HEK293 (cell line): ENCODE measurements at regions of chr17 and their contacts with region 1.

Region 1: GRCh38 chr17:76671123-76671911 is 27.8 kb upstream of the ST6GALNAC1 start:
- H3K4me3 ChIP-seq: peak overlapping the region; percentile 71
- H3K27ac ChIP-seq: peak overlapping the region; percentile 97
- H3K4me1 ChIP-seq: peaks cover 36% of the 10 kb centered on the region
- CTCF ChIP-seq: peak; percentile 62

Region 2: GRCh38 chr17:76557368-76558197 is 113.7 kb before region 1 on chr17:
- CTCF ChIA-PET with region 1: interaction called, 5 read pairs
- POLR2A ChIA-PET with region 1: interaction called, 16 read pairs
- H3K4me3 ChIP-seq: peak overlapping the region; percentile 93
- H3K27ac ChIP-seq: peak overlapping the region; percentile 82
- H3K4me1 ChIP-seq: peaks cover 20% of the 10 kb centered on the region
- CTCF ChIP-seq: peak; percentile 97

Region 3: DNA sequence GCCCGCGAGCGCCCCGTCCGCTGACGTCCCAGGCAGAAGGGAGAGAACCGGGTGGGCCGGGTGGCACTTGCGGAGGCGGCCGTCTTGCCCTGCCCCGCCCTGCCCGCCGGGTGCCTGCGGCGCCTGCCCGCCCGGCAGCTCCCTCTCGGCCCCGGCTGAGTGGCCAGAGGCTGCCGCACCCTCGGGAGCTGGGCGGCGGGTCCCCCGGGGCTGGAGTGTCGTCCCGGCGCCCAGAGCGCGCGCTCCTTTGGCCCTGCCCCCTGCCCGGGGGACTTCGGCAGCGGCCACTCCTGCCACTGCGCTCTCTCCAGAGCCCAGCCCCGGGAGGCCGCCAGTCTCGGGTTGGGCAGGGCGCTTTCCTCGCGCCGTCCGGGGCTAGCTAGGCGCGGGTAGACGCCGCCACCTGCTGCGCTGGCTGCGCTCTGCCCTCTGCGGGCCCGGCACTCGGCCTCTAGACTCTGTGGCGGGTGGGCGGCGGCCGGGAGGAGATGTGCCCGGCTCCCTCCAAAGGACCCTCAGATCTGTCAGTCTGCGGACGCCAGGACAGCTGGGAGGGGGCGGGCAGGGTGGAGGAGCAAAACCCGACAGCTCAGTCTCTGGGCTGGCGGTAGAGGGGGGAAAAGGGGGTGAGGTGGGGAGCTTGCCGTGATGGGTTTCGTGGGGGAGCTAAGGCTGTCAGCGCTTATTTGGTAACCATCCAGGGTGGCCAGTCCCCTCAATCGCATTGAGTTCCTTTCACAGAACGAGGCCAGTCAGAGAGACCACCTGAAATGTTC is 85.3 kb before region 1 on chr17 and contains the start of gene ST6GALNAC2:
- CTCF ChIA-PET with region 1: interaction called, 3 read pairs
- POLR2A ChIA-PET with region 1: interaction called, 15 read pairs
- H3K4me3 ChIP-seq: peak within 1 kb of the TSS; percentile 48
- H3K27ac ChIP-seq: peak within 1 kb of the TSS; percentile 71
- H3K4me1 ChIP-seq: peaks cover 3% of the 10 kb centered on the region; the same call in 1 of the 2 replicates
- CTCF ChIP-seq: peak; percentile 70

Region 4: DNA sequence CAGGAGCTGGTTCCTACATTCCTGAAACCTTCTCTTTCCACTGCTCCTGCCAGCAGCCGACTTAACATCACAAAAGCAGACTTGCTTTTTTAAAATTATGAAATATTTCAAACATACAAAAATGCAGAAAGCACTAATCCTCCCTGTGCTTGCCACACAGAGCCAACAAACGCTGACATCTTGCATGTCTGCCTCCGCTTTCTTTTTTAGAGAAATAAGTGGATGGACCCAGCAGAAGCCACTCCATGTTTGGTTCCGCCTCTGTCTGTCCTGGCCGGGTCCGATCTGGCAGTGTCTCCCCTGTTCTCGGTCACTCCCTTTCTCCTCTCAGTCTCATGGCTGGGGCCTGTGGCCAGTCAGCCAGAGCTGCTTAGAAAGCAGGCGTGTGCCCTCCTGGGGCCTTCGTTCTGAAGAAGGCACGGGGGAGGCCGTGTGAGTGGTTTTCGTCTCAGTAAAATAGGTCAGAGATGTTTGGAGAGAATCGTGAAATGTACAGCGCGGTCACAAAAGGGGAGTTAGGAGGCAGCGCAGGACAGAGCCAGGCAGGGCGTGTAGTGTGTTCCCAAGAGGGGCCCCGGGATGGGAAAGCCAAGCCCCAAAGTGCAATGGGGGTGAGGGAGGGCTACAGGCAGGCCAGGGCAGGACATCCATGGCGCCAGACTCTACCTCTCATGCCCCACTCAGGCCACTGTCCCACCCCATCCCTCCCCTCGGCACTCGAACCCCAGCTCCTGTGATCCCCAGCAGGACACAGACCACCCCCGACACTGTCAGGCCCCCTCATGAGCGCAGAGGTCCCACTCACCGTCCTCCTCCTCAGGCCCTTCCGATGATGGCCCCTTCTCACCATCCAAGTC is 16.2 kb after region 1 on chr17:
- CTCF ChIA-PET with region 1: interaction called, 6 read pairs
- POLR2A ChIA-PET with region 1: interaction called, 11 read pairs
- H3K4me3 ChIP-seq: no peak overlapping the region
- H3K27ac ChIP-seq: no peak overlapping the region; the same call in 1 of the 2 replicates
- H3K4me1 ChIP-seq: peaks cover 11% of the 10 kb centered on the region
- CTCF ChIP-seq: no peak

Region 5: DNA sequence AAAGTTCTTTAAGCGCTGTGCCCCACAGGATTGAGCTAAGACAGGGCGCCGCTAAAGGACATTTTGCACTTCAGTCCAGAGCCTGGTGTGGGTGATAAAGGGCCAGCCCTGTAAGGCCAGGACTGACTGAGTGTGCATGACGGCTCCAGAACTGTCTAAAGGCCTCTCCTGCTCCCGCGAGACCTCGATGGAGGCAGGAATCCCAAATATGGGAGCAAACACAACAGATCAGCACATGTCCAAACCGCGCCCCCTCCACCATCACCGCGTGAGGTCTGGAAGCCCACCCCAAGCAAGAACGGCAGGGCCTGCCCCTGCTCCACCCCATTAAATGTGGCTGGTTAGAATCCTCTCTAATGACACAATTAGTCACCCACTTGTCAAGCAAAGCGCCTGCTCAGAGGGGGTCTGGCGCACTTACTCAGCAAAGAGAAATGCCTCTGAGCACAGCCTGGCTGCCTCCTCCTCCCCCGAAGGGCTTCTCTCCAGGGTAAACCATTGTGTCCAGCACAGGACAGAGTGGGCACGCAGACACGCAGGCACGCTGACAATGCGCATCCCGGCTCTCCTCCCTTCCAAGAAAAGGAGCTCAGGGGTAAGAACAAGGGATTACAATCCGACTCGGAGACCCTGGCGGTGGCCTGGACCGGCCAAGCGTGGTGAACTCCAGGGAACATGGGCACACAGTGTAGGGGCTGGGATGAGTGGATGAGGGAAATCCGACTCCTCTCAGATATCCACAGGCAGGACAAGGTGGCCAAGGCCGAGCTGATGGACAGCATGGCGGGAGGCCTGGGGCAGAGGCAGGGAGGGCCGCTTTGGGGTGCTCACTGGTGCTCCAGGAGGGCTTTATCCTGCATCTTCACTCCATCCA is 38.0 kb after region 1 on chr17:
- CTCF ChIA-PET with region 1: interaction called, 10 read pairs
- POLR2A ChIA-PET with region 1: interaction called, 12 read pairs
- H3K4me3 ChIP-seq: peak overlapping the region; percentile 65
- H3K27ac ChIP-seq: peak overlapping the region; percentile 87
- H3K4me1 ChIP-seq: peaks cover 27% of the 10 kb centered on the region
- CTCF ChIP-seq: no peak

Region 6: GRCh38 chr17:76726231-76726775 is 55.0 kb after region 1 on chr17 and contains the start of gene JMJD6:
- CTCF ChIA-PET with region 1: no interaction called
- POLR2A ChIA-PET with region 1: interaction called, 12 read pairs
- H3K4me3 ChIP-seq: peak within 1 kb of the TSS; percentile 93
- H3K27ac ChIP-seq: peak within 1 kb of the TSS; percentile 97
- H3K4me1 ChIP-seq: peaks cover 7% of the 10 kb centered on the region
- CTCF ChIP-seq: peak; percentile 7; the same call in 1 of the 2 replicates